ENCODE measurements at regions of chr6 and their contacts with region 1.

Region 1: GRCh38 chr6:130843575-130844320 is 16.5 kb downstream of the SMLR1 start:
- DNase-seq: no peak
- ATAC-seq: peak; percentile 60
- H3K4me3 Mint-ChIP-seq: no peak overlapping the region
- H3K27ac Mint-ChIP-seq: no peak overlapping the region
- H3K4me1 Mint-ChIP-seq: peaks cover 2% of the 10 kb centered on the region
- H3K27me3 Mint-ChIP-seq: no peaks in the 10 kb centered on the region

Region 2: DNA sequence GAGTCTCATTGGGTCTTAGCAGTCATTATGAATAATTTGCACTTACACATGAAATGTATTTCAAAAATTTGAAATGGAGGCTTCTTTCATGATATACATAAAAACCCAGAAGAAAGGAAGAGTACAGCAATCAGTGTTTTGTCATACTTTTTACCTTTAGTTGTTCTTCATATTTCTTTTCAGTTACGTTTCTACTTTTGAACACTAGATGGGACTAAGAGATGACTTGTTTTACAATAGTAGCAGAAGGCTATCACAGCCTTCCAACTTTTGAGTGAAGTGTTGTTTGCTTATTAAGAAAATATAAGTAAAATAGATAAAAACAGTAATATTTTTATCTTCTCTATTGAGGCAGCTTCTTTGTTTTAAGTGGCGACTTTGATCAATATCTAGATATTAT is 767.2 kb before region 1 on chr6:
- CTCF ChIA-PET with region 1: interaction called, 3 read pairs
- POLR2A ChIA-PET with region 1: no interaction called
- intact Hi-C with region 1: loop called in 1 of 2 experiments (anchors 10 kb)
- DNase-seq: no peak
- ATAC-seq: no peak
- H3K4me3 Mint-ChIP-seq: no peak overlapping the region
- H3K27ac Mint-ChIP-seq: no peak overlapping the region
- H3K4me1 Mint-ChIP-seq: peaks cover 13% of the 10 kb centered on the region
- H3K27me3 Mint-ChIP-seq: no peaks in the 10 kb centered on the region

Region 3: GRCh38 chr6:130822736-130823135 is 21.0 kb before region 1 on chr6:
- CTCF ChIA-PET with region 1: no interaction called
- POLR2A ChIA-PET with region 1: no interaction called
- intact Hi-C with region 1: no loop called
- DNase-seq: no peak
- ATAC-seq: no peak
- H3K4me3 Mint-ChIP-seq: no peak overlapping the region
- H3K27ac Mint-ChIP-seq: no peak overlapping the region
- H3K4me1 Mint-ChIP-seq: peaks cover 2% of the 10 kb centered on the region
- H3K27me3 Mint-ChIP-seq: peaks cover 2% of the 10 kb centered on the region

Measured in activated CD4-positive, alpha-beta T cell treated with anti-CD3 and anti-CD28 coated beads for 36 hours (primary cell).